ENCODE measurements at regions of chr9 and their contacts with region 1.

Region 1: GRCh38 chr9:134178768-134179551 is 14.6 kb upstream of the RNU6ATAC start:
- DNase-seq: peak in 1 of 2 donors; percentile 85
- H3K4me3 ChIP-seq: no peak overlapping the region
- CTCF ChIP-seq: no peak
- POLR2A ChIP-seq: no peak

Region 2: DNA sequence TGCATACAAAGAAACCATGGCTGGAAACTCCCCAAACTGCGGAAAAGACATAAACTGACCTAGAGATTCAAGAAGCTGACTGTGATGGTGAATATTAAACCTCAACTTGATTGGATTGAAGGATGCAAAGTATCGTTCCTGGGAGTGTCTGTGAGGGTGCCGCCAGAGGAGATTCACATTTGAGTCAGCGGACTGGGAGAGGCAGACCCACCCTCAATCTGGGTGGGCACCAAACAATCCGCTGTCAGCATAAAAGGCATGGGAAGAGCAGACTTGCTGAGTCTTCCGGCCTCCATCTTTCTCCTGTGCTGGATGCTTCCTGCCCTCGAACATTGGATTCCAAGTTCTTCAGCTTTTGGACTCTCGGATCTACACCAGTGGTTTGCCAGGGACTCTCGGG is 67.9 kb before region 1 on chr9:
- intact Hi-C with region 1: no loop called
- DNase-seq: no peak
- H3K4me3 ChIP-seq: no peak overlapping the region
- CTCF ChIP-seq: no peak
- POLR2A ChIP-seq: no peak

Region 3: GRCh38 chr9:134253606-134254198 is 74.7 kb after region 1 on chr9:
- intact Hi-C with region 1: loop called (anchors 10 kb)
- DNase-seq: no peak
- H3K4me3 ChIP-seq: no peak overlapping the region
- CTCF ChIP-seq: no peak
- POLR2A ChIP-seq: no peak

Region 4: DNA sequence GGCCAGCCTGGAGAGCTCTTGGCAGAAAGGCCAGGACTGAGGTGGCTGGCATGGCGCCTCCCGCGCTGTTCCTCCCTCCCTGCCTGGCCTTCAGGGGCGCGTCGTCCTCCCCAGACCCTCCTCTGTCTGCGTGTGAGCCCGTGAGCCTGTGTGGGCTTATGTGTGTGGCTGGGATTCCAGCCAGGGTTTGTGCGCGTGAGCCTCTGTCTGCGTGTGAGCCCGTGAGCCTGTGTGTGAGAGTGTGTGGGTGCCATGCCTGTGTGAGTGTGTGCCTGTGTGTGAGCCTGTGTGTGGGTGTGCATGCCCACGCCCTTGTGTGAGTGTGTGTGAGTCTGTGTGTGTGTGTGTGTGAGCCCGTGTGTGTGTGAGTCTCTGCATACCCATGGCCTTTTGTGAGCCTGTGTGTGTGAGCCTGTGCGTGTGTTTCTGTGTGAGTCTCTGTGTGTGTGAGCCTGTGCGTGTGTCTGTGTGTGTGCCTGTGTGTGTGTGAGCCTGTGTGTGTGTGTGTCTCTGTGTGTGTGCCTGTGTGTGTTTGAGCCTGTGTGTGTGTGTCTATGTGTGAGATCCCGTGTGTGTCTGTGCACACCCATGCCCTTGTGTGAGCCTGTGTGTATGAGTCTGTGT is 160.3 kb after region 1 on chr9:
- intact Hi-C with region 1: loop called (anchors 10 kb)
- DNase-seq: no peak
- H3K4me3 ChIP-seq: no peak overlapping the region
- CTCF ChIP-seq: no peak
- POLR2A ChIP-seq: no peak

Region 5: GRCh38 chr9:134488331-134488881 is 309.4 kb after region 1 on chr9:
- intact Hi-C with region 1: no loop called
- DNase-seq: peak in 1 of 2 donors; percentile 90
- H3K4me3 ChIP-seq: no peak overlapping the region
- CTCF ChIP-seq: no peak
- POLR2A ChIP-seq: no peak

Region 6: GRCh38 chr9:134742822-134743535 is 564.0 kb after region 1 on chr9:
- intact Hi-C with region 1: loop called (anchors 10 kb)
- DNase-seq: no peak
- H3K4me3 ChIP-seq: no peak overlapping the region
- CTCF ChIP-seq: no peak
- POLR2A ChIP-seq: no peak

Region 7: GRCh38 chr9:136138566-136138965 is 1959.6 kb after region 1 on chr9:
- intact Hi-C with region 1: no loop called
- DNase-seq: no peak
- H3K4me3 ChIP-seq: no peak overlapping the region
- CTCF ChIP-seq: no peak
- POLR2A ChIP-seq: no peak